B cell (primary cell): ENCODE measurements at regions of chr1 and their contacts with region 1.

Region 1: GRCh38 chr1:211578640-211579433 is at the start of gene SLC30A1:
- DNase-seq: peak; percentile 99
- ATAC-seq: peak; percentile 87
- H3K4me3 ChIP-seq: peak within 1 kb of the TSS; percentile 66 to 92 (median 77)
- H3K4me3 Mint-ChIP-seq: peak within 1 kb of the TSS; percentile 99
- H3K27ac ChIP-seq: peak within 1 kb of the TSS in 1 of 2 donors; percentile 77
- H3K27ac Mint-ChIP-seq: peak within 1 kb of the TSS; percentile 94
- H3K4me1 ChIP-seq: peaks cover 25 to 26% of the 10 kb centered on the region in 2 donors
- H3K4me1 Mint-ChIP-seq: peaks cover 38% of the 10 kb centered on the region
- H3K27me3 ChIP-seq: no peaks in the 10 kb centered on the region
- H3K27me3 Mint-ChIP-seq: no peaks in the 10 kb centered on the region
- CTCF ChIP-seq: no peak
- total RNA-seq, gene SLC30A1: 12.2 and 12.3 TPM in 2 replicates

Region 2: GRCh38 chr1:210342986-210343780 is 1235.7 kb before region 1 on chr1:
- CTCF ChIA-PET with region 1: no interaction called
- POLR2A ChIA-PET with region 1: no interaction called
- intact Hi-C with region 1: loop called (anchors 5 kb)
- DNase-seq: peak; percentile 90
- ATAC-seq: peak; percentile 90
- H3K4me3 ChIP-seq: peak overlapping the region; percentile 30 to 76 (median 52)
- H3K4me3 Mint-ChIP-seq: no peak overlapping the region
- H3K27ac ChIP-seq: peak overlapping the region; percentile 80 to 82
- H3K27ac Mint-ChIP-seq: no peak overlapping the region
- H3K4me1 ChIP-seq: peaks cover 29 to 30% of the 10 kb centered on the region in 2 donors
- H3K4me1 Mint-ChIP-seq: peaks cover 35% of the 10 kb centered on the region
- H3K27me3 ChIP-seq: no peaks in the 10 kb centered on the region
- H3K27me3 Mint-ChIP-seq: no peaks in the 10 kb centered on the region
- CTCF ChIP-seq: no peak

Region 3: GRCh38 chr1:211382714-211383480 is 195.9 kb before region 1 on chr1:
- CTCF ChIA-PET with region 1: no interaction called
- POLR2A ChIA-PET with region 1: no interaction called
- intact Hi-C with region 1: loop called (anchors 2 kb)
- DNase-seq: peak; percentile 89
- ATAC-seq: peak; percentile 96
- H3K4me3 ChIP-seq: peak overlapping the region; percentile 75 to 92 (median 88)
- H3K4me3 Mint-ChIP-seq: peak overlapping the region; percentile 89
- H3K27ac ChIP-seq: peak overlapping the region; percentile 96 to 98
- H3K27ac Mint-ChIP-seq: peak overlapping the region; percentile 100
- H3K4me1 ChIP-seq: peaks cover 13 to 14% of the 10 kb centered on the region in 2 donors
- H3K4me1 Mint-ChIP-seq: peaks cover 22% of the 10 kb centered on the region
- H3K27me3 ChIP-seq: no peaks in the 10 kb centered on the region
- H3K27me3 Mint-ChIP-seq: no peaks in the 10 kb centered on the region
- CTCF ChIP-seq: no peak

Region 4: DNA sequence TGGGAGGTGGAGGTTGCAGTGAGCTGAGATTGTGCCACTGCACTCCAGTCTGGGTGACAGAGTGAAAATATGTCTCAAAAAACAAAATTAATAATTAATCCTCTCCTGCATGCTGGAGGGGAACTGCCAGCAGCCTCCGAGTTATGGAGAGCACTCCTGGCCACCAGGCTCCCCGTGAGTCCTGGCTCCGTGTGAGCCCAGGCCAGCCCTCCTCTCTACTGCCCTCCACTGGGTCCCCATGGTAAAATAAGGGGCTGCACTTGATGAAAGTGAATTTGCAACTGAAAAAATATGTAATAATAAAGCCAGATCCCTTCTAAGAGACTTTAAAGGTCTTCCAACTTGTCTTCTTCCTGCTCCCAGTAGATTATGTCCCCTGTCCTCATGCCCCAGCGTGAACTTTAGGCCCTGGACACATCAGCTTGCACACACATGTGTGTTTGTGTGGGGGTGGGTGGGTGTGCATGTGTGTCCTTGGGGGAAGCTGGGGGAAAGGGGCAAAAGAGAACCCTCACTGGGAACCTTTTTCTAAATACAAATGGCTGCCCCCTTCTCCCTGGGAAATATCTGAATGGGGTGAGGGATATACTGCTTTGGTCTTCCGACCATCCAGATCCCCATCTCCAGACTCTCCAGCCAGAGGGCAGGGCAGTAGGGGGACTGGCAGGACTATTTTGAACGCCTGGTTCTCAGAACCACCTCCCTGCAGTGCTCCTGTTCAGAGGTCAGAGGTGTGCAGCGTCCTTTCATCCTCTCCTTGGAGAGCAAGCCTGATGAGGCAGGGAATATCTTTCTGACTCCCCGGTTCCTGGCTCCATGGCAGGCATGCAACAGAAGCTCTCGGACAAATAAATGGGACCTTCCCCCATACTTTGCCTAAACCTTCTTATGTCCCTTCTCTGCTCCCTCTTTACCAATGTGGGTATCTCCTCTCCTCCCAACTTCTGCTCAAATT is 70.4 kb after region 1 on chr1:
- CTCF ChIA-PET with region 1: interaction called, 6 read pairs
- POLR2A ChIA-PET with region 1: no interaction called
- intact Hi-C with region 1: loop called (anchors 1 kb)
- DNase-seq: no peak
- ATAC-seq: peak; percentile 63
- H3K4me3 ChIP-seq: no peak overlapping the region
- H3K4me3 Mint-ChIP-seq: no peak overlapping the region
- H3K27ac ChIP-seq: no peak overlapping the region
- H3K27ac Mint-ChIP-seq: no peak overlapping the region
- H3K4me1 ChIP-seq: no peaks in the 10 kb centered on the region
- H3K4me1 Mint-ChIP-seq: no peaks in the 10 kb centered on the region
- H3K27me3 ChIP-seq: peaks cover 0 to 6% (median 1%) of the 10 kb centered on the region in 4 experiments
- H3K27me3 Mint-ChIP-seq: peaks cover 9% of the 10 kb centered on the region
- CTCF ChIP-seq: peak; percentile 56

Region 5: GRCh38 chr1:211680752-211681327 is 102.0 kb after region 1 on chr1:
- CTCF ChIA-PET with region 1: interaction called, 11 read pairs
- POLR2A ChIA-PET with region 1: no interaction called
- intact Hi-C with region 1: no loop called
- DNase-seq: peak; percentile 89
- ATAC-seq: peak; percentile 90
- H3K4me3 ChIP-seq: no peak overlapping the region
- H3K4me3 Mint-ChIP-seq: peak overlapping the region; percentile 44
- H3K27ac ChIP-seq: peak overlapping the region; percentile 70 to 81
- H3K27ac Mint-ChIP-seq: peak overlapping the region; percentile 87
- H3K4me1 ChIP-seq: peaks cover 24 to 35% of the 10 kb centered on the region in 2 donors
- H3K4me1 Mint-ChIP-seq: peaks cover 52% of the 10 kb centered on the region
- H3K27me3 ChIP-seq: no peaks in the 10 kb centered on the region
- H3K27me3 Mint-ChIP-seq: no peaks in the 10 kb centered on the region
- CTCF ChIP-seq: peak; percentile 86

Region 6: DNA sequence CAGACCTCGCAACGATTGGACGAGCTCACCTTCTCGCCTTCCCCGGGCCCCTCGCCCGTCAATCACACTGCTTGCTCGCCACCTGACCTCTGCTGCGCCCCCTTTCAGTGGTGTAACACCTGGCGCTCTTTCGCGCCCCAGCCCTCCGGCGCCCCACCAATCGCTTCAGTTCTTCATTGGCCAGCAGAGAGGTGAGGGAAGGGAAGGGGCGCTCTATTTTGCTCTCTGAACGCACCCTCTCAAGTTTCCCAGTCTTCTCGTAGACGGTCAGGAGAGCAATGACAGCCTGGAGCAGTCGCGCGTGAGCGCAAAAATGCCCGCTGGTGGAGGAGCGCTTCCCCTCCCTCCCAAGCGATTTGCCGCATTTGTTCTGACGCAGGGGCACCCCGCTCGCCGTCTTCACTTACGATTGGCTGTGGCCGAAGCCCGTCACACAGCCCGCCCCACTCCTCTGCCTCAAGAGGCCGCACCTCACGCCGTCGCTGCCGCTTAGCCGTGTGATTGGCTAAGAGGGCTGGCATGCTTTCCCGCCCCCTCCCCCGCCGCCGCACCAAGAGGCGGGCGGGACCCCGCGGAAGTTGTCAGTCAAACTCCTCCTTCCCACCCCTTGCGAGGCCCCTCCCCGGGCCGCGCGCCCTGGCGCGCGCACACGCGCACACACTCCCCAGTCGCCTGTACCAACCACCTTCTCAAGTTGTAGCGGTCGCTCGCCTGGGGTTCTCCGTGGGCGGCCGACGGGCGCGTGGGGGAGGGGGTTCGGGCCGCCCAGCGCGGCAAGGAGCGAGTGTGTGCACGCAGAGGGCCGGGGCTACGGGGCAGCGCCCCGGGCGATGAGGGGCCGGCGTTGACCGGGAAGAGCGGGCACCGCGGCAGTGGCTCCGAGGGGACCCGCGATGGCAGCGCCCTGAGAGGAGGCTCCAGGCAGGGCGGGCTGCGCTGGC is 706.2 kb after region 1 on chr1 and contains the start of gene PPP2R5A:
- CTCF ChIA-PET with region 1: no interaction called
- POLR2A ChIA-PET with region 1: no interaction called
- intact Hi-C with region 1: loop called (anchors 2 kb)
- DNase-seq: peak; percentile 100
- ATAC-seq: peak; percentile 85
- H3K4me3 ChIP-seq: peak within 1 kb of the TSS; percentile 75 to 97 (median 92)
- H3K4me3 Mint-ChIP-seq: peak within 1 kb of the TSS; percentile 93
- H3K27ac ChIP-seq: peak within 1 kb of the TSS; percentile 89 to 90
- H3K27ac Mint-ChIP-seq: peak within 1 kb of the TSS; percentile 96
- H3K4me1 ChIP-seq: peaks cover 22 to 28% of the 10 kb centered on the region in 2 donors
- H3K4me1 Mint-ChIP-seq: peaks cover 41% of the 10 kb centered on the region
- H3K27me3 ChIP-seq: no peaks in the 10 kb centered on the region
- H3K27me3 Mint-ChIP-seq: no peaks in the 10 kb centered on the region
- CTCF ChIP-seq: peak; percentile 62
- total RNA-seq, gene PPP2R5A: 41.1 and 43.4 TPM in 2 replicates